Cardiac septum (tissue), 1 donor: ENCODE measurements at regions of chr5 and their contacts with region 1.

Region 1: DNA sequence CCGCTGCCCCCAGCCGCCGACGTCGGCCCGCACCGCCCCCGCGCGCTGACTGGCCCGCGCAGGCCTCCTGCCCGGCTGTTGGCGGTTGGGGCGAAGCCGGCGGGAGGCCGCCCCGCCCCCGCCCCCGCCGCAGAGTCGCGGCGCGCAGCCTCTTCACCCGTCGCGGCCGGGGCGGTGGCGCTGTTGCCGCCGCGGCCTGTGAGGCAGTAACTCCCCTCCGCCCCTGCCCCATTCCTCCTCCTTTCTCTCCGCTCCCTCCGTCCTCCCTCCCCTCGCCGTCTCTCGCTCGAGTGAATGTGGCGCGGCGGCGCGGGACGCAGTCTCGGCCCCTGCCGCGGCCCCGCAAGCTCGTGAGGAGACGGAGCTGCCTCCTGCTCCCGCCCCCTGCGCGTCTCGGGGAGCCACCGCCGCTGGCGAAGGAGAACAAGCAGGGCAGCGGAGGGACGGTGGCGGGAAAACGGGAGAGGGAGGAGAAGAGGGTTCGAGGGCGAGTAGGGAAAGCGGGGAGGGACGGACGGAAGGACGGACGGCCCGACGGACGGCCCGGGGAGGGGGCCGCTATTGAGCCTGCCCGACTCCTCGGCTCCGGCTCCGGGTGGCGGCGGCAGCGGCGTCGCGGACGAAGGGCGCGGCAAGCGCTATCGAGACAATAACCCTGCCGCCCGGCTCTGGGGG is 637 bp upstream of the ERBIN start:
- DNase-seq: peak; percentile 90

Region 2: GRCh38 chr5:65252977-65253376 is 672.8 kb before region 1 on chr5:
- intact Hi-C with region 1: no loop called
- DNase-seq: no peak

Region 3: GRCh38 chr5:65563777-65564176 is 362.0 kb before region 1 on chr5:
- intact Hi-C with region 1: no loop called
- DNase-seq: no peak

Region 4: DNA sequence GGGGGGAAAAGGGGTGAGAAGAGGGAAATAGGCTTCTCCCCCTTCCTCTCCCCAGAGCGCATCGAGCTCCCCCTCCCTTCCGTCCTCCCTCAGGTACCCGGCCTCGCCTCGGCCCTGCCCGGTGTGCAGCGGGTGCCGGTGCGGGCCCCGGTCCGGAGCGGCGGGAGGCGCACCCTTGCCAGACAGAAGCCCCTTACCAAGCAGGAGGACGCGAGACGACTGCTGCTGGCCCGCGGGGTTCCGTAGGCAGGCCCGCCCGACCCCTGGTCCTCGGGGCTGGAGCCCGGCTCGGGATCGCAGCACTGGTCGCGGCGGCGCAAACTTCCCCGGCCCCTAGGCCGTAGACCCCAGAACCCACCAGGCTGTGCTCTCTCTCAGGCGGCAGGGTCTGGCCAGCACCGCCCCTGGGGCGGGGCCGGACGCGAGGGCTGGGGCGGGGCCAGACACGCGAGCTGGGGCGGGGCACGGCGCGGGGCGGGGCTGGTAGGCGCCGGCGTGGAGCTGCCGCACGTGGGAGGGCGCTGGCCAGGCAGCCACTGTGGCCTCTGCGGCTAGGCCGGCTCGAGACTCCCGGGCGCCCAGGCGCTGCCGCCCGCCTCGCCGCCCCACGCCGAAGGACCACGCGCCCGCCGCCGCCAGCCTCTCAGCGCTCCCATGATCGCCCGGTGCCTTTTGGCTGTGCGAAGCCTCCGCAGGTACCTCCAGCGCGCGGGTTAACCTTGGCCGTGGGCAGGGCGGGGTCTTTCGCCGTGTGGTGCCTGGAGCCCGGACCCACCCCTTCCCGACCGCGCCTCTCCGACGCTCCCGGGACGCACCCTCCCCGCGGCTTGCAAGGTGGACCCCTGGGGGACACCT is 203.8 kb before region 1 on chr5 and contains the starts of genes NLN and SGTB:
- intact Hi-C with region 1: loop called (anchors 2 kb)
- DNase-seq: peak; percentile 96
- total RNA-seq, gene NLN: 17.2 TPM
- total RNA-seq, gene SGTB: 9.5 TPM

Region 5: DNA sequence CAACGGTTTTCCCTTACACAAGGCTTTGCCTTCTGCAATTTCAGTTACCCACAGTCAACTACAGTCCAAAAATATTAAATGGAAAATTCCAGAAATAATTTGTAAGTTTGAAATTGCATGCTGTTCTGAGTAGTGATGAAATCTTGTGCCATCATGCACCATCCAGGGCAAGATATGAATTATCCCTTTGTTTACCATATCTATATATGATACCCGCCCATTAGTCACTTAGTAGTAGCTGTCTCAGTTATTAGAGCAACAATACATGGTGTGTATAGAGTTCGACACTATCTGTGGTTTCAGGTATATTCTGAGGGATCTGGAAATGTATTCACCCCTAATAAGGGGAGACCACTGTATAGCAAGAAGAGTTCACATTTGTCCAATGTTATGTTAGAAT is 30.0 kb after region 1 on chr5:
- intact Hi-C with region 1: no loop called
- DNase-seq: no peak